Activated CD4-positive, alpha-beta memory T cell treated with anti-CD3 and anti-CD28 coated beads, Interleukin-2, amount 10 ng/mL, durations not matched to agents 7 days and 5 days (primary cell): ENCODE measurements at regions of chr20 and their contacts with region 1.

Region 1: DNA sequence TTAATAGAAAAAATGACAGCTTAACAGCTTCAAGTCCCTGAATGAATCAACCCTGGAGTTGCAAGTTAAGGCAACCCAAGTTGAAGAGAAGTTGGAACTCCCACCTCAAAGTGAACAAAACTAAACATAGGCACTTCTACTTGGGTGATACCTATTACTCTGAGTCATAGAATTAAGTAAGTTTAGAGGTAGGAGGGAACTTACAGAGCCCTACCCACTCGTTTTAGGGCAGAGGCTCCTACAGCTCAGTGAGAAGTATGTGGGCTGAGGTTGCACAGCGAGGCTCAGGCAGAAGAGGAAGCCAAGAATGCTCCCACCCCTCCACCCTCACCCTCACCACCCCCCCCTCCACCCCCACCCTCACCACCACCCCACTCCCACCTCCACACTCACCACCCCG is 42.2 kb downstream of the NFATC2 start:
- DNase-seq: peak; percentile 66
- H3K4me3 Mint-ChIP-seq: no peak overlapping the region
- H3K27ac Mint-ChIP-seq: peak overlapping the region; percentile 75
- H3K4me1 Mint-ChIP-seq: peaks cover 84% of the 10 kb centered on the region
- H3K27me3 Mint-ChIP-seq: no peaks in the 10 kb centered on the region

Region 2: DNA sequence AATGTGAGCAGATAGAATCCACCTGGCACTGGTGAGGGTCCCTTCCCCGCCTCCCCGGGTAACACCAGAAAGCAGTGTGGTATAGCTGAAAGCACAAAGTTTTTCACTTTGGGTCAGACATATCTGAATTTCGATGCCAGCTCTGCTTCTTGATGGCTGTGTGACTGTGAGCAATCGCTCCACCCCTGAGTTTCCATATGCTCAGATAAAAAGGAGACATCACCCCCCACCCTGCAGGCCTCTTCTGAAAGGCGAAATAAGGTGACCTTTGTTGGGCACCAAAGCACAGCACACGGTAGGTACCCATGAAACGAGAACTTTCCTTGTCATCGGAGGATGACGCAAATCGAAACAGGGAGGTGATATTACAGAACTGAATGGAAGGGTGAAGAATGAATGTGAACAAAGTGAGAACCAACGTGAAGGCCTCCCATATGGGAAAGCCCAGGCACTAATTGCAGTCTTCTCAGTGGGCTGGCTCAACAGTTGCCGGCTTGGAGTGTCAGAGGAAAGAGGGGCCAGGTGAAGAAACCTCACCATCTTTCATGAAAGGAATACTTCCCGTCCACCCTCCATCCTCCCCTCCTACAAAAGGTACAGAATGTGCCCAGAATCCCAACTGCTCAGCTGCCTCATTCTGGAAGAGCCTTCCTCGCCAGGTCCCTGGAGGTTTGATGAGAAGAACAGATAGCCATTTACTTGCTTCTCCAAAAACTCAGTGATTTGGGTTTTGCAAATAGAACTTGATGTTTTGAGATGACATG is 19.6 kb before region 1 on chr20:
- CTCF ChIA-PET with region 1: no interaction called
- POLR2A ChIA-PET with region 1: interaction called, 23 read pairs
- DNase-seq: peak; percentile 50
- H3K4me3 Mint-ChIP-seq: peak overlapping the region; percentile 58
- H3K27ac Mint-ChIP-seq: peak overlapping the region; percentile 80
- H3K4me1 Mint-ChIP-seq: peaks cover 86% of the 10 kb centered on the region
- H3K27me3 Mint-ChIP-seq: no peaks in the 10 kb centered on the region

Region 3: DNA sequence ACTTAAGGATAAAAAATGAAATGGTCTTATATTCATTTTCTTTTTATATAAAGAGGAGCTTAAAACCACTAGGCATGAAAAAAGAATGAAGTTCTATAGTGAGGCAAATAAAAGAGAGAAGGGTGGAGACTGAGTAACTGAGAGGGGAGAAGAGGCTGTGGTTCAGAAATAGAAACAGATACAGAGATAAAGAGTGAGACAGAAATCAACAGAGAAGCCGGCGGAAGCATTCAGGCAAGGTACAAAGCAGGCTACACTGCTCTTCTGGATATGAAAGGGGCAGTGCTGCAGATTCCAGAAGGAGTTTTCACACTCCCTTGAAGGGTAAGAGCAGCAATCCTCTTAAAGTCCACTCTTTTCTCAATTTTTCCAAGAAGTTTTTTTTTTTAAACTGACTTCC is 12.3 kb after region 1 on chr20:
- CTCF ChIA-PET with region 1: interaction called, 5 read pairs
- POLR2A ChIA-PET with region 1: interaction called, 19 read pairs
- DNase-seq: no peak
- H3K4me3 Mint-ChIP-seq: no peak overlapping the region
- H3K27ac Mint-ChIP-seq: peak overlapping the region; percentile 80
- H3K4me1 Mint-ChIP-seq: peaks cover 74% of the 10 kb centered on the region
- H3K27me3 Mint-ChIP-seq: no peaks in the 10 kb centered on the region

Region 4: DNA sequence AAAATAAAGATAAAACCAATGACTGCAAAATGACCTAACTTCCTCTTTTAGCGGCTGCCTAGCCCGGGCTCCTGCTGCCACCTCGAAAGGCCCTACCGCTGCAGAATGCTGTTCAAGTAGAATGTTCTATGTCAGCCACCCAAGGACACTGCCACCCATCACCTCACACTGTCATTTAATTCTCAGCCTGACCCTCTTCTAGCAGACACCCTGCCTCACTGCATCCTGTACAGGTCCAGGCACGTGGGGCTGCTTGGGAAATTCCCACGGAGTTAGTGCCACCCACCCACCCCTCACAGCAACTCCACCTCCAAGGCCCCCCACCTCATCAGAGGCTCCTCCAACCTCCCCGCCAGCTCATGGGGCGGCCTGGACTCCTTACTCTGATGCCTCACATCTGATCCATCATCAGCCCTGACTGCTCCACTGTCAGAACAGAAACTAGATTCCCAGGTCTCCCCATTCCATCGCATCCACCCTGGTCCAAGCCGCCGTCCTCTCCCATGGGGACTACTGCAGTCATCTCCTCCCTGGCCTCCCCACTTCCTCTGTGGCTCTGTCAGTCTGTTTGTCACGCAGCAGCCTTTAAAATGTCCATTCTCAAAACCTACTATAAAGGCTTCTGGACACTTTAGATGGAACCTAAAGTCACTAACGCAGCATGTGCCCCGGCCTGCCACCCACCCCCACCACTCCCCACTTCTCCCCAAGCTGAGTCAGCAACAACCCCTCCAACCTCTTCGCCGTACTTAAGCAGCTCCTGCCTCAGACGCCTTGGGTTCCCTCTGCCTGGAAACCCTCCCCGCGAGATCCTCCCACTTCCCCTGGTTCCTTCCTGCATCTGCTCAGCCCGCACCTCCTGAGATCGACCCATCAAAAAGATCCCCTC is 25.2 kb after region 1 on chr20:
- CTCF ChIA-PET with region 1: no interaction called
- POLR2A ChIA-PET with region 1: interaction called, 13 read pairs
- DNase-seq: peak; percentile 55
- H3K4me3 Mint-ChIP-seq: peak overlapping the region; percentile 69
- H3K27ac Mint-ChIP-seq: peak overlapping the region; percentile 90
- H3K4me1 Mint-ChIP-seq: peaks cover 76% of the 10 kb centered on the region
- H3K27me3 Mint-ChIP-seq: no peaks in the 10 kb centered on the region